ENCODE measurements at regions of chr3 and their contacts with region 1.

Region 1: DNA sequence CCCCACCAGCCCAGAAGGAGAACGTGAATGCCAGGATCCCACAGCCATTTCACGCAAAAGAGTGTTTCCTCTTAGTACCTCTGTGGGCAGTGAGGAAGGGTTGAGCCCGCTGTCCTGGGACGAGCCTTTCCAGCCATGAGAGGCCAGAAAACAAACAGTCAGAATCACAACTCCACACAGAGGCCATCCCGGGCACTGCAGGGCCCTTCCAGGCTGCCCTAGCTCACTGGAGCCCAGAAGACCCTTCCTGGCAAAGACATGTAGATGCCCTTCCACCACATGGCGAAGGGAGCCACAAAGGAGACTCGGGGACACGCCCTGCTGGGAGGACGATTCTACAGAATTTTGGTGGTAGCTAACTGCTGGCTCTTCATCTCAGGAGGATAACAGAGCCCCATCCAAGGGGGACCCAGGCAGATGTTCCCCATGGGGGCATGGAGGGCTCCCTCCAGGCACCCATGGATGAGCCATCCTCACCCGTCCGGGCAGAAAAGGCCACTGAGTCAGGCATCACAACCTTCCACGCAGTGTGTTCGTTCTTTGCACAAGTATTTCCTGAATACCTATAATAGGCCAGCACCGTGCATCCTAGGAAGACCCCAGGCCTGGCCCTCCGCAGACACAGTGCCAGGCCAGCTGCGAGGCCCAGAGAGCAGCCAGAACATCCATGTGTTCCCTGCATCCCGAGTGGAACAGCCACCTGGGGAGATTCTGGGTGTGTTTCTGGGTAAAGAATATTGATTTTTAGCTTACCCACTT is 47.2 kb downstream of the SLC12A8 start:
- DNase-seq: peak; percentile 56 to 69 (median 59)
- ATAC-seq: peak; percentile 76 to 86 (median 81)
- H3K4me3 ChIP-seq: no peak overlapping the region
- H3K27ac ChIP-seq: no peak overlapping the region
- H3K4me1 ChIP-seq: peaks cover 7 to 42% (median 20%) of the 10 kb centered on the region in 12 donors
- H3K27me3 ChIP-seq: no peaks in the 10 kb centered on the region
- CTCF ChIP-seq: peak; percentile 68 to 89 (median 80)
- POLR2A ChIP-seq: no peak

Region 2: GRCh38 chr3:124202754-124203153 is 962.6 kb before region 1 on chr3:
- intact Hi-C with region 1: no loop called
- DNase-seq: peak; percentile 58 to 86 (median 77)
- ATAC-seq: peak; percentile 76 to 93 (median 88)
- H3K4me3 ChIP-seq: no peak overlapping the region
- H3K27ac ChIP-seq: peak overlapping the region in 2 of 12 donors; percentile 10 to 44
- H3K4me1 ChIP-seq: peaks cover 0 to 40% (median 23%) of the 10 kb centered on the region in 12 donors
- H3K27me3 ChIP-seq: no peaks in the 10 kb centered on the region
- CTCF ChIP-seq: no peak
- POLR2A ChIP-seq: no peak

Region 3: DNA sequence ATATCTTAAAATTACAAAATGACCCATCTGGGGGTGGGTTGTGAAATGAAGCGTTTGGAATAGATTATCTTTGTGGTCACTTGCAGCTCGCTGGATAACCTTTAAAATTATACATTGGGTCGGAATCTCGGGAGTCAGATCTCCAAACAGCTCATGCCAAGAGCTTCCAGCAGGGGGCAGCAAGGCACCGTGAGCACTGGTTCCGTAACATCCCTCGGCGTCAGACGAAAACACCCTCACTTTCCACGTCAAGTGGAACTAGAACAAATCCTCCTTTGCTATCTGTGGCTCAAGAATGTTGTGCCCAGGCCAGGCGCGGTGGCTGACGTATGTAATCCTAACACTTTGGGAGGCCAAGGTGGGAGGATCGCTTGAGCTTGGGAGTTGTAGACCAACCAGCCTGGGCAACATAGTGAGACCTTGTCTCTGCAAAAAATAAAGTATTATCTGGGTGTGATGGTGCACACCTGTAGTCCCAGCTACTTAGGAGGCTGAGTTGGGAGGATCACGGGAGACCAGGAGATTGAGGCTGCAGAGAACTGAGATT is 404.0 kb before region 1 on chr3:
- intact Hi-C with region 1: loop called in 3 of 10 experiments (anchors 10 kb)
- DNase-seq: peak; percentile 84 to 92 (median 87)
- ATAC-seq: peak; percentile 90 to 93 (median 92)
- H3K4me3 ChIP-seq: peak overlapping the region in 1 of 12 donors; percentile 18
- H3K27ac ChIP-seq: peak overlapping the region in 9 of 12 donors; percentile 12 to 73 (median 51)
- H3K4me1 ChIP-seq: peaks cover 0 to 18% (median 9%) of the 10 kb centered on the region in 12 donors
- H3K27me3 ChIP-seq: no peaks in the 10 kb centered on the region
- CTCF ChIP-seq: peak; percentile 95 to 98 (median 97)
- POLR2A ChIP-seq: peak in 1 of 2 donors; percentile 24

Region 4: DNA sequence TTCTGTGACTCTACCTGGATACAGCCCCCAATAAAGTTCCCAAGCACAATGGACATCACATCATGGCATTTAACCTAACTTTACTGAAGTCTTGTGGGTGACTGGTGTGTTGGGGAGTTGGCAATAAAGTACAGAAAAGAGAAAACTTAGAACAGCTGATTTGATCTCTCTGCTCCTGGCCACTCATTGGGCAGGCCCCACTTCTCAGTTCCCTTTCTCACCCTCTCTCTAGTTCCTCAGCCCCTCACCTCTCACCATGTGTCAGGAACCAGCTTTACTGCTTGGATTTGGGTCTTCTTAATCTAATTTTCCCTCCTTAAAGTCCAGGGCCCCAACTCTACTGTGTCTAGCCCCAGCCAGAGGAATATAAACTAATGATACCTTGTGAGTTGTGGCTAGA is 230.1 kb before region 1 on chr3:
- intact Hi-C with region 1: loop called in 1 of 10 experiments (anchors 5 kb)
- DNase-seq: no peak
- ATAC-seq: no peak
- H3K4me3 ChIP-seq: no peak overlapping the region
- H3K27ac ChIP-seq: no peak overlapping the region
- H3K4me1 ChIP-seq: no peaks in the 10 kb centered on the region
- H3K27me3 ChIP-seq: peaks cover 0 to 5% (median 0%) of the 10 kb centered on the region in 9 donors
- CTCF ChIP-seq: no peak
- POLR2A ChIP-seq: no peak

Region 5: DNA sequence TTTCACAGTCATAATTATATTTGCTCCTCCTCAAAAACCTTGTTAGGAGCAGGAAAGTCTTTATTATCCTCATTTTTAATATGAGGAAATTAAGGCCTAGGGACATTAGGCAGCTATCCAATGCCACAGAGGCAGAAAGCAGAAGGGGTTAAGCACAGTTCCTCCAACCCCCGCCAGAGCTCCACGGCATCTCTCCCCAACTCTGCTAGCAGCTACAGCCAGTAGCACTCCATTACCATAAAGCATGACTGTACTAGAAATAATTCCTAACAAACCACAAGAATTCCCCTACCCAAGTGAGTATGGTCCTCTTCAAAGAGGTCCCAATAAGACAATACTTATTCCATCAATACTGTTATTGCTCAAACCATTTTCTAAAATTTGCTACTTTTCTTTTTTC is 119.4 kb before region 1 on chr3:
- intact Hi-C with region 1: loop called in 3 of 10 experiments (anchors 5 kb)
- DNase-seq: no peak
- ATAC-seq: no peak
- H3K4me3 ChIP-seq: no peak overlapping the region
- H3K27ac ChIP-seq: peak overlapping the region in 10 of 12 donors; percentile 80 to 98 (median 92)
- H3K4me1 ChIP-seq: peaks cover 21 to 100% (median 97%) of the 10 kb centered on the region in 12 donors
- H3K27me3 ChIP-seq: no peaks in the 10 kb centered on the region
- CTCF ChIP-seq: no peak
- POLR2A ChIP-seq: no peak

Region 6: GRCh38 chr3:125437631-125438435 is 272.5 kb after region 1 on chr3:
- intact Hi-C with region 1: loop called in 1 of 10 experiments (anchors 10 kb)
- DNase-seq: peak in 4 of 5 donors; percentile 30 to 36 (median 34)
- ATAC-seq: peak in 3 of 4 donors; percentile 36 to 56 (median 55)
- H3K4me3 ChIP-seq: no peak overlapping the region
- H3K27ac ChIP-seq: no peak overlapping the region
- H3K4me1 ChIP-seq: no peaks in the 10 kb centered on the region
- H3K27me3 ChIP-seq: no peaks in the 10 kb centered on the region
- CTCF ChIP-seq: peak; percentile 88 to 99 (median 96)
- POLR2A ChIP-seq: no peak